Mammary epithelial cell (primary cell): ENCODE measurements at regions of chr20 and their contacts with region 1.

Region 1: GRCh38 chr20:56121850-56122249 is 116.5 kb upstream of the CBLN4 start:
- DNase-seq: no peak
- H3K4me3 ChIP-seq: no peak overlapping the region
- H3K27ac ChIP-seq: no peak overlapping the region
- H3K4me1 ChIP-seq: no peaks in the 10 kb centered on the region
- H3K27me3 ChIP-seq: no peaks in the 10 kb centered on the region
- CTCF ChIP-seq: no peak

Region 2: GRCh38 chr20:56032251-56032650 is 89.6 kb before region 1 on chr20:
- CTCF ChIA-PET with region 1: no interaction called
- dilution Hi-C with region 1: loop called (anchors 5 kb)
- in situ Hi-C with region 1: no loop called
- intact Hi-C with region 1: no loop called
- DNase-seq: no peak
- H3K4me3 ChIP-seq: no peak overlapping the region
- H3K27ac ChIP-seq: no peak overlapping the region
- H3K4me1 ChIP-seq: no peaks in the 10 kb centered on the region
- H3K27me3 ChIP-seq: no peaks in the 10 kb centered on the region
- CTCF ChIP-seq: no peak

Region 3: DNA sequence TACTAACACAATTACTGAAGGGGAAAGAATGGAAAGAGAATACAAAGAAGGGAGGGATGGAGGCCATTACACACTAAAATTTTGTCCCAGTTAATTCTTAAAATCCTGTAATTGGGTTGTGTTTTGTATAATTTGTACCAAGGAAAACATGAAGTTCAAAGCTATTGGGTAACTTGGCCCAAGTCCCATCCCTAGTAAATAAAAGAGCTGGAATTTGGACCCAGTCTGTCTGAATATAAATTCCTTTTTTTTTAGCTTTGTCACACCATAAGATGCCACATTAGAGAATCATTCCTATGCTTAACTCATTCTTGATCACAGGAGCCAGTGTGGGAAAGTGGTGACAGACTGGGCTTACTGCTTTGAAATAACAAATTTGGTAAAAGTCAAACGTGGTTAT is 49.7 kb before region 1 on chr20:
- CTCF ChIA-PET with region 1: no interaction called
- dilution Hi-C with region 1: no loop called
- in situ Hi-C with region 1: no loop called
- intact Hi-C with region 1: no loop called
- DNase-seq: no peak
- H3K4me3 ChIP-seq: no peak overlapping the region
- H3K27ac ChIP-seq: no peak overlapping the region
- H3K4me1 ChIP-seq: no peaks in the 10 kb centered on the region
- H3K27me3 ChIP-seq: no peaks in the 10 kb centered on the region
- CTCF ChIP-seq: no peak

Region 4: GRCh38 chr20:56094228-56094627 is 27.6 kb before region 1 on chr20:
- CTCF ChIA-PET with region 1: no interaction called
- dilution Hi-C with region 1: no loop called
- in situ Hi-C with region 1: no loop called
- intact Hi-C with region 1: no loop called
- DNase-seq: no peak
- H3K4me3 ChIP-seq: no peak overlapping the region
- H3K27ac ChIP-seq: no peak overlapping the region
- H3K4me1 ChIP-seq: no peaks in the 10 kb centered on the region
- H3K27me3 ChIP-seq: no peaks in the 10 kb centered on the region
- CTCF ChIP-seq: no peak